Breast epithelium (tissue), 4 donors: ENCODE measurements at regions of chrX and their contacts with region 1.

Region 1: GRCh38 chrX:121333942-121334341 is 286.5 kb downstream of the GLUD2 start:
- DNase-seq: no peak
- H3K4me3 ChIP-seq: no peak overlapping the region
- H3K27ac ChIP-seq: no peak overlapping the region
- H3K4me1 ChIP-seq: no peaks in the 10 kb centered on the region
- H3K27me3 ChIP-seq: peaks cover 0 to 4% of the 10 kb centered on the region in 2 donors
- CTCF ChIP-seq: no peak
- POLR2A ChIP-seq: no peak

Region 2: GRCh38 chrX:120207009-120207615 is 1126.8 kb before region 1 on chrX:
- intact Hi-C with region 1: loop called (anchors 10 kb)
- DNase-seq: no peak
- H3K4me3 ChIP-seq: no peak overlapping the region
- H3K27ac ChIP-seq: no peak overlapping the region
- H3K4me1 ChIP-seq: no peaks in the 10 kb centered on the region
- H3K27me3 ChIP-seq: no peaks in the 10 kb centered on the region
- CTCF ChIP-seq: no peak
- POLR2A ChIP-seq: no peak

Region 3: GRCh38 chrX:121084903-121085611 is 248.9 kb before region 1 on chrX:
- intact Hi-C with region 1: no loop called
- DNase-seq: no peak
- H3K4me3 ChIP-seq: no peak overlapping the region
- H3K27ac ChIP-seq: no peak overlapping the region
- H3K4me1 ChIP-seq: no peaks in the 10 kb centered on the region
- H3K27me3 ChIP-seq: peaks cover 0 to 3% of the 10 kb centered on the region in 2 donors
- CTCF ChIP-seq: no peak
- POLR2A ChIP-seq: no peak